Activated naive CD4-positive, alpha-beta T cell treated with anti-CD3 and anti-CD28 coated beads for 36 hours (primary cell): ENCODE measurements at regions of chr3 and their contacts with region 1.

Region 1: DNA sequence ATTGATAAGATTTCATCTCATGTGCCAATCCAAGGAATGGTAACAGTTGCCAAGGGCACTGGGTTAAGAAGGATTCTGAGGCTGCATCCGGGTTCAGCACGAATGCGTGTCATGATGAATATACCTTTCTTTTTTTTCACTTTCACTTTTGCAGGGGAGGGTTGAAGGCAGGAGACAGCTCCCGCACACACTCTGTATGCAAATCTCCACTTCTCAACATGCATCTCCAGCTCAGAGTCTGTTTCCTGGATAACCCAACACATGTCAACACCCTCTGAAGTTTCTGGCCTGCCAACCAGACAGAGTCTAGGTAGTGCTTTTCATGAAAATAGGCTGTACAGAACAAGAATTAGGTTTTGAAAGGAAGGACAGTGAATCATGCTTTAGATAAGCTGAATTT is 21.6 kb downstream of the B4GALT4 start:
- DNase-seq: peak; percentile 78
- H3K4me3 Mint-ChIP-seq: peak overlapping the region; percentile 63
- H3K27ac Mint-ChIP-seq: peak overlapping the region; percentile 94
- H3K4me1 Mint-ChIP-seq: peaks cover 74% of the 10 kb centered on the region
- H3K27me3 Mint-ChIP-seq: no peaks in the 10 kb centered on the region

Region 2: DNA sequence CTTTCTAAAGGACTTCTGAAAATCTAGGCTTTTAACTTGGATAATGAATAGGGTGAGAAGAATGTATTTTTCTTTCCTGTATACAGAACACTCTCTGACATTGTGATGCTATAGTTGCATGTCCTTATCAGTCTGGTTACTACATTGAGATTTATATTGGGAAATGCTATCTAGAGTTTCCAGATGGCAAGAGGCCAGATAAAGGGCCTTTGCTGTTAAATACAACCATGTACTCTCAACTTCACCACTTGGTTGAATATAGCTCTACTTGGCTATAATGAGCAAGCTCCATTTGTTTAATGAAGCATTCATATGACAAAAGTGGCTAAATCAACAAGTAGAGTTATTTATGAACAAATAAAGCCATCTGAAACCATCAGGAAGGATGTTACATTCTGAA is 275.5 kb before region 1 on chr3:
- CTCF ChIA-PET with region 1: no interaction called
- intact Hi-C with region 1: loop called (anchors 5 kb)
- DNase-seq: no peak
- H3K4me3 Mint-ChIP-seq: no peak overlapping the region
- H3K27ac Mint-ChIP-seq: no peak overlapping the region
- H3K4me1 Mint-ChIP-seq: peaks cover 45% of the 10 kb centered on the region
- H3K27me3 Mint-ChIP-seq: no peaks in the 10 kb centered on the region

Region 3: GRCh38 chr3:119234610-119235009 is 15.5 kb after region 1 on chr3:
- CTCF ChIA-PET with region 1: interaction called, 8 read pairs
- intact Hi-C with region 1: loop called (anchors 1 kb)
- DNase-seq: no peak
- H3K4me3 Mint-ChIP-seq: no peak overlapping the region
- H3K27ac Mint-ChIP-seq: peak overlapping the region; percentile 60
- H3K4me1 Mint-ChIP-seq: peaks cover 75% of the 10 kb centered on the region
- H3K27me3 Mint-ChIP-seq: no peaks in the 10 kb centered on the region

Region 4: DNA sequence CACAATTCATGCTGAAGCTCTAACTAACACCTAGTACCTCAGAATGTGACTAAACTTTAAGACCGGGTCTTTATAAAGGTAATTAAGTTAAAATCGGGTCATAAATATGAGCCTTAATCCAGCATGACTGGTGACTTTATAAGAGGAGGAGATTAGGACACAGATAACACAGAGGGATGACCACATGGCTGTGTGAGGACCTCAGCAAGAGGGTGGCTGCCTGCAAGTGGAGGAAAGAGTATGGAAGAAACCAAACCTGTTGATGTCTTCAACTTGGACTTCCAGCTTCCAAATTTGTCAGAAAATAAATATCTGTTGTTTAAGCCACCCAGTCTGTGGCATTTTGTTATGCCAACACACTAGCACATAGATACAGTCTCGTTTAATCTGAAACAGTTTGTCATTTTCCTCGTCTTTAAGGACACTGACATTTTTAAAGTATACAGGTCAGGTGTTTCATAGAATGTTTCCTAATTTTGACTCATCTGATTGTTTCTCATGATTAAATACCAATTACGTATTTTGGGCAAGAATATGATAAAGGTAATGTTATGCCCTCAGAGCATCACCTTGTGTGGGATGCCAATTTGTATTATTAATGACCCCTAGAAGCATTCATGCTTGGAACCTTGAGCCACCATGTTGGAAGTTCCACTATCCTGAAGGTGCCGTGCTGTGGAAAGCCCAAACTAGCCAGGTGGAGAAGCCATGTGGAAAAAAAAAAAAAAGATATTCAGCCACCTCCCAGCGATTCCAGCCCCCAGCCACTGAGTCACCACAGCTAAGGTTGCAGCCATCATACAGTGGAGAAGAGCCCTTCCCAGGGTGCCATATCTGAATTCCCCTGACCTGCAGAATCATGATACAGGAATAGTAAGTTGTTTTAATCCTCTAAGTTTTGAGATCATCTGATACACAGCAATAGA is 40.6 kb after region 1 on chr3:
- CTCF ChIA-PET with region 1: no interaction called
- intact Hi-C with region 1: no loop called
- DNase-seq: no peak
- H3K4me3 Mint-ChIP-seq: no peak overlapping the region
- H3K27ac Mint-ChIP-seq: no peak overlapping the region
- H3K4me1 Mint-ChIP-seq: peaks cover 3% of the 10 kb centered on the region
- H3K27me3 Mint-ChIP-seq: no peaks in the 10 kb centered on the region

Region 5: GRCh38 chr3:119322835-119323722 is 104.0 kb after region 1 on chr3:
- CTCF ChIA-PET with region 1: no interaction called
- intact Hi-C with region 1: loop called (anchors 1 kb)
- DNase-seq: peak; percentile 96
- H3K4me3 Mint-ChIP-seq: peak overlapping the region; percentile 83
- H3K27ac Mint-ChIP-seq: peak overlapping the region; percentile 94
- H3K4me1 Mint-ChIP-seq: peaks cover 47% of the 10 kb centered on the region
- H3K27me3 Mint-ChIP-seq: no peaks in the 10 kb centered on the region

Region 6: GRCh38 chr3:119463171-119464169 is 244.4 kb after region 1 on chr3 and contains the start of gene TMEM39A:
- CTCF ChIA-PET with region 1: no interaction called
- intact Hi-C with region 1: loop called (anchors 1 kb)
- DNase-seq: peak; percentile 98
- H3K4me3 Mint-ChIP-seq: peak within 1 kb of the TSS; percentile 96
- H3K27ac Mint-ChIP-seq: peak within 1 kb of the TSS; percentile 90
- H3K4me1 Mint-ChIP-seq: peaks cover 32% of the 10 kb centered on the region
- H3K27me3 Mint-ChIP-seq: no peaks in the 10 kb centered on the region
- total RNA-seq, gene TMEM39A: 21.4 to 26.9 TPM

Region 7: DNA sequence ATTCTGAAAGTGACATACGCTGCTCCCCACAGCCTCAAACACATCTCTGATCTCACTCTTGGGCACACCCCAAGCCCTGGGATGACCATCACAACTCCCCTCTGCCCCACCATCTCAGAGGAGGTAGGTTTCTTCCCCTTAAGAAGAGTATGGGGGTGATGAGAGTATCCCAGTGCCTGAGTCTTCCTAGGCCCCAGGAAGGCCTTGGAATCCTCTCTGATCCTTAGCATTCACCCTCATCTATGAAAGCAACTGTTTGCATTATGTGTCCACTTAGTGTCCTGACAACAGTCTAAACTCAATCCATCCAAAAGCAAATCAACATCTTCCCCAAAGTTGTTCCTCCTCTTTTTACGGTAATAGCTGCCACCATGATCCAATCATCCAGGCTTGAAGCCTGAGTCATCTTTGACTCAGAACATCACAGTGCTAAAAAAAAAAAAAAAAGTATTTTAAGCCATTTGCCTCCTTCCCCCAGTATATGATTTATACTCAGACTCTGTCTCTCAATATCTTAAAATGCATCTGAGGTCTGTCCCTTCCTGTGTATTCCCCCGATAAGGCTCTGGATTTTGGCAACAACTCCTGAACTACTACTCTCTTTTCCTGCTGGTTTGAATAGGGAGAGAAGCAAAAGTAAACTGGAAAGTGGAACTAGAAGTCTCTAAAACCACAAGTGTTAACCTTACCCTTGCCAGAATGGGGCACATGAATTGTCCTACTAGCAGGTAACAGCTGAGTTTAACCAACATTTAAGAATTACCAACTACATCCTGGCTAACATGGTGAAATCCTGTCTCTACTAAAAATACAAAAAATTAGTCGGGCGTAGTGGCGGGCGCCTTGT is 418.8 kb after region 1 on chr3:
- CTCF ChIA-PET with region 1: no interaction called
- intact Hi-C with region 1: loop called (anchors 1 kb)
- DNase-seq: peak; percentile 19
- H3K4me3 Mint-ChIP-seq: no peak overlapping the region
- H3K27ac Mint-ChIP-seq: peak overlapping the region; percentile 91
- H3K4me1 Mint-ChIP-seq: peaks cover 36% of the 10 kb centered on the region
- H3K27me3 Mint-ChIP-seq: no peaks in the 10 kb centered on the region

Region 8: DNA sequence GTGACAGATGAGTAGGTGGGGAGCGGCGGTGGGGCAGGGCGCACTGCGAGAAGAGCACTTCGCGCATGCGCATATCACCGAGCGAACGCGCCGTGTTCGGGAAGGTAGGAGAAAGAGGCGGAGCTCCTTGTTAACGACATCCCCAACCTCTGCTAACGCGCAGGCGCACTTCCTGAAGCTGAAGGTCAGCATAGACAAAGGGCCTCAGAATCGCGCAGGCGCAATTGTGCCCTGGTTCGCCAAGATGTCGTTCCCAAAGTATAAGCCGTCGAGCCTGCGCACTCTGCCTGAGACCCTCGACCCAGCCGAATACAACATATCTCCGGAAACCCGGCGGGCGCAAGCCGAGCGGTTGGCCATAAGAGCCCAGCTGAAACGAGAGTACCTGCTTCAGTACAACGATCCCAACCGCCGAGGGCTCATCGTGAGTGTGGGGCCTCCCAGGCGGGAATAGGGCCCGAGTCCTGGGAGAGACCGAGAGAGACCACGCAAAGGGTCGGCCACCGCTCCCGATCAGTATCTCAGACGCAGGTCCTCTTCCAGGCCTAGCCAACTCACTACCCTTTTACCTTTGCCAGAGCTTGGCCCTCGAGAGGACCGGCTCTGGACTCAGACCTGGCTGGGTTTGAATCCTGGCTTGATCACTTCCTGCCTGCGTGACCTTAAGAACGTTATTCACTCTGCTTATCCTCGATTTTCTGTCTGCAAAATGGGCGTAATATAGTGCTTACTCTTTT is 1377.2 kb after region 1 on chr3 and contains the start of gene NDUFB4:
- CTCF ChIA-PET with region 1: no interaction called
- intact Hi-C with region 1: loop called (anchors 2 kb)
- DNase-seq: peak; percentile 97
- H3K4me3 Mint-ChIP-seq: peak within 1 kb of the TSS; percentile 86
- H3K27ac Mint-ChIP-seq: peak within 1 kb of the TSS; percentile 95
- H3K4me1 Mint-ChIP-seq: peaks cover 7% of the 10 kb centered on the region
- H3K27me3 Mint-ChIP-seq: no peaks in the 10 kb centered on the region
- total RNA-seq, gene NDUFB4: 146 to 152 TPM